OCI-LY7 (cell line): ENCODE measurements at regions of chr2 and their contacts with region 1.

Region 1: DNA sequence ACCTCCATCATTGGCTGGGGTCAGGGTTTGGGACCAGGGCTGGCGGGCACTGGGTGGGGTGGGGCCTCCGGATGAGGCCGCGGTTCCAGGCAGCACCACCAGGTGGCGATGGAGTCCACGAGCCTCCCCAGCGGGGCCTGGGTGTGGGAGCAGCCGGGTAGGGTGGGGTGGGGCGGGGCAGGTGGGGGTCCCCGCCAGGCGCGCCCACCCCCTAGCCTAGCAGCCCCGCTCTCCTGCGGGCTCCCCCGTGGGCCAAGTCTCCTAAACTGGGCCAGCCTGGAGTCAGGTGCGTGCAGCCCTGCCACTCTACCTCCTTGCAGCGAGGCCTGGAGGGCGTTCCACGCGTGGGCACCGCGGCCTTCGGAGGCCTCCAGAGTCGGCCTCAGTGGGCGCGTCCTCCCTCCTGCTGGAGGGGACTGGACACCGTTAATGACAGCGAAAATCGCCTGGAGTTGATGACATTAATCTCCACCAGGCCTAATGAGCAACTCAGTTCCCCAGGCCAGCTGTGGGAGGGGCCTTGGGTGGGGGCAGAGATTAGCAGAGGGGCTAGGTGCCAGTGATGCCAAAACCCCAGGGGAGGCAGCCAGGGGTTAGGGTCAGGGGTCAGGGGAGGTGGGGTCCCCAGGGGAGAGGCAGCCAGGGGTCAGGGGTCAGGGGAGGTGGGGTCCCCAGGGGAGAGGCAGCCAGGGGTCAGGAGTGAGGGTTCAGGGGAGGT is 187.6 kb downstream of the TWIST2 start:
- DNase-seq: peak; percentile 35
- H3K4me3 ChIP-seq: no peak overlapping the region
- H3K27ac ChIP-seq: no peak overlapping the region
- H3K4me1 ChIP-seq: no peaks in the 10 kb centered on the region
- CTCF ChIP-seq: peak; percentile 75

Region 2: GRCh38 chr2:238060542-238061314 is 974.8 kb before region 1 on chr2 and contains the start of gene SCLY:
- CTCF ChIA-PET with region 1: no interaction called
- POLR2A ChIA-PET with region 1: no interaction called
- intact Hi-C with region 1: no loop called
- DNase-seq: peak; percentile 97
- H3K4me3 ChIP-seq: peak within 1 kb of the TSS; percentile 79
- H3K27ac ChIP-seq: peak within 1 kb of the TSS; percentile 34
- H3K4me1 ChIP-seq: peaks cover 30% of the 10 kb centered on the region
- CTCF ChIP-seq: no peak
- total RNA-seq, gene SCLY: 39.3 and 41.7 TPM in 2 replicates

Region 3: DNA sequence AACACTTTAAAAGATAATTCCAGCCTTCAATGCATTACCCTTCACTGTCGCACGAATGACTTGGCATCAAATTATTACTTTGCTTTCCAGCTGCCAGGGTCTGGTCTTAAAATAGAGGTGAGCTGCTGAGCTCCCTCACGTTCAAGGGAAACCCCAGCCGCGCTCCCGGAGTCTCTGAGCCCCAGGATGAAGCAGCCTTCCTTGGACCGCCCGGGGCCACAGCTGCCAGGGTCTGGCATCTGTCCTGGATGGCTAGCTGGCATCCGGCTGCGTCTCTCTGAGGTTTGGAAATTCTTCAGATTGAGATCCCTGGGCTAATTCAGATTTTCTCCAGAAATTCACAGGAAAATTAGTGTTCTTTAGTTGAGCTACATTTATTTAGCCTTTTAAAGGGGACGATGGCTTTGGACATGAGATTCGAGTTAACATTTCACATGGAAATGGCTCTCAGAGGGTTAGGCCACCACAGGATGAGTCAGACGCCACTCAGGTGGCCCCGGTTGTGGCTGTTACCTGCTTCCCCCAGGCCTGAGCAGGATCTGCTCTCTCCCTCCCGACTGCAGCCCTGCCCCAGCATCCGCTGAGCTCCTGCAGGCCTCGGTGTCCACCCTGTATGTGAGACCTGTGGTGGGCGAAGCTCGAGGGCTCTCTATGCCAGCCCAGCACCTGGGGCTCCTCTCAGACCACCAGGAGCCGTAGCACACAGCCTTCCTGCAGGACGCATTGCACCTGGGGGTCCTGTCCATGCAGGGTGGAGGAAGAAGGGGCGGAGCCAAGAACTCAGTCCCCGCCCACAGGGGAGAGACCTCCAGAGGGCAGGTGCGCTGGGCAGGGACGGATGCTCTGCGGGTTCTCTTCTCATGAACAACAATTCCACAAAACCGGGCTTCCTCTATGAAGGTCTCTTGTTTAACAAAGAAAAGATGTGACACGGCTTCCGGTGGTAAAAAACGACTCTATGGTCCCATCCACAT is 67.9 kb after region 1 on chr2:
- CTCF ChIA-PET with region 1: no interaction called
- POLR2A ChIA-PET with region 1: no interaction called
- intact Hi-C with region 1: loop called (anchors 2 kb)
- DNase-seq: no peak
- H3K4me3 ChIP-seq: no peak overlapping the region
- H3K27ac ChIP-seq: no peak overlapping the region
- H3K4me1 ChIP-seq: no peaks in the 10 kb centered on the region
- CTCF ChIP-seq: no peak

Region 4: DNA sequence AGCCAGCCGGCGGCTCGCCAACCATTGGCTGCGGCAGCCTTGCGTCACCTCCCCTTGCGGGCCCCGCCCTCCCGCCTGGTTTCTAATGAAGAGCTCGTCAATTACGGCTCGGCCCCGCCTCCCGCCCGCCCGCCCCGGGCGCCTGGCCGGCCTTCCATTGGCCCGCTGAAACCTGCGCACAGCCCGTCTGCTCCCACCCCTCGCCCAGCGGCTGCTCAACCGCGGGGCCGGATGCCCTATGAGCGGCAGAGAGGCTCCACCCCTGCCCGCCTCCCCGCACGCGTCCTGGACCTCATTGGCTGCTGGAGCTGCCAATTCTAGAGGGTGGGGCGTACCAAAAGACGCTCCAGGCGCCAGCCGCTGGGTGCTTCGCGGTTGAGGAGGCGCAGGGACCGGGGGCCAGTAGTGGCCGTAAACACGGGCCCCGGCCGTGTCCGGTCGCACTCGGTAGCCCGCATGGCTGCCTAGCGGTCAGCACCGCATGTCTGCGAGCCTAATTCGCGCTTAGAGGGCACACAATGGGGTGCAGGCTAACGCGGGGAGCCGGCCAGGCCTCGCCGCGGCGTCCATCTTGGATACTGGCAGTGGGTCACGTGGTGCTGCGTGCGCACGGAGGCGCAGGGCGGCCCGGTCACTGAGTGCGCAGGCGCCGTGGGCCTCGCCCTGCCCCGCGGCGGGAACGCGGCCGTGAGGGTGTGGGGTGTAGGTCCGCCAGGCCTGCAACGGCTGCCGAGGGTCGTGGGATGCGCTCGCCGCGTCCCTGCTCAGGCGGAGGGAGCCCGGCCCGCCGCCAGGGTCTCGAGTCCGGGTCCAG is 365.8 kb after region 1 on chr2:
- CTCF ChIA-PET with region 1: no interaction called
- POLR2A ChIA-PET with region 1: no interaction called
- intact Hi-C with region 1: loop called (anchors 2 kb)
- DNase-seq: peak; percentile 97
- H3K4me3 ChIP-seq: peak overlapping the region; percentile 68
- H3K27ac ChIP-seq: peak overlapping the region; percentile 54
- H3K4me1 ChIP-seq: peaks cover 19% of the 10 kb centered on the region
- CTCF ChIP-seq: no peak

Region 5: DNA sequence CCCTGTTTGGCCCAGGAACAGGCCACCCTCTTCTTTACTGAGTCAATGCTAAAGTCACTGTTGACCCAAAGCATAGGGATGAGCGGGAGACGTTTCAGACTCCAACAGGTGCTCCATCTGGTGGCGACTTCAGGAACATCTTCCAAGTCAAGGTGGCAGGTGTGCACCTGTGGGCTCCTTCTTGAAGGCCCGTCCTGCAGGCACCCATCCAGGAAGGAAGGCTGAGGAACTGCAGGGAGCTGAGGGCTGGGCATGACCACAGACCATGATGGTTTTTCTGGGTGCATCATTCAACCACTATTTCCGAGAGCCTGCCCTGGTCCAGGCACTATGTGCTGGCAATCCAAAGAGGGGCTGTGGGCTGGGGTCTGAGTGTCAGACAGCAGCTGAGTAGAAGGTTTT is 846.8 kb after region 1 on chr2:
- CTCF ChIA-PET with region 1: no interaction called
- POLR2A ChIA-PET with region 1: no interaction called
- intact Hi-C with region 1: loop called (anchors 10 kb)
- DNase-seq: peak; percentile 46
- H3K4me3 ChIP-seq: no peak overlapping the region
- H3K27ac ChIP-seq: no peak overlapping the region
- H3K4me1 ChIP-seq: peaks cover 10% of the 10 kb centered on the region
- CTCF ChIP-seq: peak; percentile 81

Region 6: DNA sequence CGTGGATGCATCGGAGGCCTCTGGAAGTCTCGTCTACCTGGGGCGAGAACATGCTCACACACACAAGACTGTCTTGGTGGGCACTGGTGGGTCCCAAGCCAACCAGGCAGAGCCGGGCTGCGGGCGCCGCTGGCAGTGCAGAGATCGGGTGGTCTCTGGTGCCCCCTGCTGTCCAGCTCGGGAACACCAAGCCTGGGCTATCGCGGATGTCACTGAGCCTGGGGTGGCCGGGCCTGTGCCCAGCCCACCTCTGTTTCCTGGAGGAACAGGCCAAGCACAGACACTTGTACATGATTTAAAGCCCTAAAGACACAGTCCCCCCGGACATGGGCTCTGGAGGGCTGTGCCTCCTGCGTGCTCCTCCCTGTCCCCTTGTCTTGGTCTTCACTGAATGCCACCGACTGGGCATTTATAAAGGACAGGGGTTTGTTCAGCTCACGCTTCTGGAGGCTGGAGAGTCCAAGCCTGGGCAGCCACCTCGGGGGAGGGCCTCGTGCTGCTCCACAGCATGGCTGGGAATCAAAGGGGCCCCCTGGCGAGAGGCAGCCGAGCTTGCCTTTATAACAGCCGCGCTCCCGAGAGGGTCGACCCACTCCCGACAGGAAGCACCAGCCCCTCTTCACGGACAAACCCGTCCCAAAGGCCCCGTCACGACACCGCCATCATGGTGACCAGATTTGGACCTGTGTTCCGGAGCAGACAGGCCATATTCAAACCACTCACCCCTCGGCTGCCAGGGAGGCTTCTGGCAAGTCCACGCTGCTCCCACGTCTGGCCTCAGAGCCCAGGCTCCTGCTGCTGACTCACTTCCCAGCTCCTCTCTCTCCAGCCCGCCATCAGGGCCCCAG is 1108.5 kb after region 1 on chr2:
- CTCF ChIA-PET with region 1: no interaction called
- POLR2A ChIA-PET with region 1: no interaction called
- intact Hi-C with region 1: loop called (anchors 10 kb)
- DNase-seq: peak; percentile 58
- H3K4me3 ChIP-seq: no peak overlapping the region
- H3K27ac ChIP-seq: no peak overlapping the region
- H3K4me1 ChIP-seq: no peaks in the 10 kb centered on the region
- CTCF ChIP-seq: peak; percentile 90